ENCODE measurements at regions of chr2 and their contacts with region 1.

Region 1: DNA sequence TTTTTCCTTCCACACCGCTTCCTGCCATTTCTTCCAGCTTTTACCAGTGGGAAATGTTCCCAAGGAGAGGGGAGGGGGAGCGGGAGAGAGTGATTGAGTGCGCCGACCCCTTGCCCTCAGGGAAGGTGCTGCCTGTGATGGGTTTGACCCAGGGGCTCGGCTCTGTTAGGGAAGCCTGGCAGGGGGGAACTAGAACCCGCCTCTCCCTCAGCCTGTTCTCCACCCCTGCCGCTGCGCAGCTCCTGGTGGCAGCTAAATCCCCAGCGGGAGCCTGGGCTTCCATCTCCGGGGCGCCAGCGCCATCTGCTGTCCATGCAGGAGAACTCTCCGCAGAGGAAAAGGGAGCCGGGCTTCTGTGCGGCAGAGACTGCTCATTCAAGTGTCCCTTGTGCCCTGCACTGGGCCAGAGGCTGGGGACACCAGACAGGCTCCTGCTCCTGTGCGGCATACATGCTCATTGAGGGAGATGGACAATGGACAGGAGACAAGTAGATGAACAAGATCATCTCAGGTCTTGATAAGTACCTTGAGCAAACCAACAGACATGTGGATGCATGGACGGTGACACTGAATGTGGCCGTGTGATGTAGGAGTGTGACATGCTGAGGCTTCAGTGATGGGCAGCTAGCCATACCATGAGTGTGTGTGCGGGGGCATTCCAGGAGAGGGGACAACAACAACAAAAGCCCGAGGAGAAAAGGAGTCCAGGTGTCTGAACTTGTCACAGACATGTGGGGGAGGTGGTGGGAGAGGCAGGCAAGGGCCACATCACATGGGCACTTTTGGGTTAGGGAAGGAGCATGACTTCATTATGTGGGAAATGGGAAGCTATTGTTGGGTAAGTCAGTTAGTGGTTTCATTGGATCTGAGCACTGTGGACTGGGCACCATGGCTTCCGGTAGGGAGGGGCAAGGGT is 13.3 kb downstream of the CHPF start:
- DNase-seq: peak; percentile 75
- H3K4me3 Mint-ChIP-seq: no peak overlapping the region
- H3K27ac Mint-ChIP-seq: no peak overlapping the region
- H3K4me1 Mint-ChIP-seq: no peaks in the 10 kb centered on the region
- H3K27me3 Mint-ChIP-seq: peaks cover 44% of the 10 kb centered on the region

Region 2: GRCh38 chr2:219402665-219403515 is 127.4 kb before region 1 on chr2:
- intact Hi-C with region 1: loop called (anchors 1 kb)
- DNase-seq: peak; percentile 34
- H3K4me3 Mint-ChIP-seq: no peak overlapping the region
- H3K27ac Mint-ChIP-seq: no peak overlapping the region
- H3K4me1 Mint-ChIP-seq: no peaks in the 10 kb centered on the region
- H3K27me3 Mint-ChIP-seq: peaks cover 10% of the 10 kb centered on the region

Region 3: DNA sequence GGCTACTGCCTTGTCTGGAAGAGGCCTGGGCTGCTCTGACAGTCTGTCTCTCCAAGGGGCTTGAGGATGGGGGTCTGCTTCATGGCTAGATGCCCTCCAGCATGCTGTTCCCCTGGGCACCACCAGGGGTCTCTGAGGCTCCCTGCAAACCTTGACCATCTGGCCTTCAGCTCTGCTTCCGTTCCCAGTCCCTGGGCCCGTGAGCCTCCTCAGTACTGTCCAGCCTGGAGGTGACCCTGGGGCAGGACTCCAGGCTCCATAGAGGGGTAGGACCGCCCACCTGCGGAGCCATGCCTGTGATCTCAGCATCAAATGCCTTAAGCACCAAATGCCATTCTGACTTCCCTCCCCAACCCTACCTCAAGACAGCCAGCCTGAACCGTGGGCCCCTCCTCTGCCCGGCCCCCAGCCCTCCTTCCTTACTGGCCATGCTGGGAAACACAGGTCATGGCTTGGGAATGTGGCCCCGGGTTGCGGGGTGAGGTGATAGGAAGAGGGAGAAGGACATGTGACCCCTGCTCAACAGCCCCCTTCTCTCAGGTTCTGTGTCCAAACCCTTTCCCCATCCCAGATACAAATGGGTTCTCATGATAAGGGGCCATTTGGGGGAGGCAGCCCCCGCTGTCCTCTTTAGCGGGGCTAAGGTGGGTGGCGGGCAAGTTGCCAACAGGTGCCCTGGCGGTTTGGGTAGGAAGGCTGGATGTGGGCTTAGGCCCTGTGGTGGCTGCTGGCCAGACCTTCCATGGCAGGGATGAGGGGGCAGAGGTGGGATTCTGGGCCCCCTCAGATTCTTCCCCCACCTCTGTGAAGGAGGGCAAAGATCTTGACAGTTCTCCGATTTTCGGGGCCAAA is 70.6 kb before region 1 on chr2:
- intact Hi-C with region 1: loop called (anchors 1 kb)
- DNase-seq: no peak
- H3K4me3 Mint-ChIP-seq: no peak overlapping the region
- H3K27ac Mint-ChIP-seq: no peak overlapping the region
- H3K4me1 Mint-ChIP-seq: peaks cover 7% of the 10 kb centered on the region
- H3K27me3 Mint-ChIP-seq: no peaks in the 10 kb centered on the region

Region 4: GRCh38 chr2:219475697-219476651 is 54.3 kb before region 1 on chr2:
- intact Hi-C with region 1: loop called (anchors 1 kb)
- DNase-seq: peak; percentile 39
- H3K4me3 Mint-ChIP-seq: no peak overlapping the region
- H3K27ac Mint-ChIP-seq: no peak overlapping the region
- H3K4me1 Mint-ChIP-seq: peaks cover 4% of the 10 kb centered on the region
- H3K27me3 Mint-ChIP-seq: peaks cover 4% of the 10 kb centered on the region

Region 5: DNA sequence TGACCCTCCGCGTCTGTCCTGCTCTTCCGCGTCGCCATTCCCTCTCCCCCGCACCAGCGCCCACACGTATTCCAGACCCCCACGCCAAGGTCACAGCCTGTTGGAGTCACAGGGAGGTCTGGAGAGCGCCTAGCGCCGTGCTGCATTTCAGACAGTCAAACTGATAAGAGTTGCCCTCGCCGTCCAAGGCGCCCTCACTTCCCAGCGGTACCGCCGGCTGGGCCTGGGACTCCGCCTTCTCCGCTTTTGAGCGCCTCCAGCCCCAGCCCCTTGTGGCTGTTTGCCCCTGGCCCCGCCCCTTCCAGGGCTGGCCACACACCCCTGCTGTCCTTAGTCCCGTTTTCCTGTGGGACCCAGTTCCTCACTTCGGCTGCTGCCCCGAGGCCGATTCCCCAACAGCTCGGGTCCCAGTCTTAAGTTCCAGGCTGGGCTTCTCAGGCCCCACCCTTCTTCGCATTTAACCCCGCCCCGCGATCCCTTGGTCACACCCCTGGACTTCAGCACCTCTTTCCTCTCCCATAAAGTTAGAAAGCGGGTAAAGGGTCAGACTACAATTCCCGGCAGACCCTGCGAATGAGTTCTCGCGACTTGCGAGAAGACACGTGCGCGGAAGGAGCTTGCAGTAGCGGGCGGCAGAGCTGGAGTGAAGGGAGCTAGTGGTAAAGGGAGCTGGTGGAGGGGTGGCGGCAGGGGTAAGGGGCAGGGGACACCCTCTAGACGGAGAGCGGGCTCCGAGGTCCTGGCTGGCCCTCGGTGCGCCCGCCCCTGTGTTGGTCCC is 31.8 kb before region 1 on chr2 and contains the start of gene GMPPA:
- intact Hi-C with region 1: loop called (anchors 1 kb)
- DNase-seq: peak; percentile 95
- H3K4me3 Mint-ChIP-seq: peak within 1 kb of the TSS; percentile 96
- H3K27ac Mint-ChIP-seq: peak within 1 kb of the TSS; percentile 91
- H3K4me1 Mint-ChIP-seq: peaks cover 33% of the 10 kb centered on the region
- H3K27me3 Mint-ChIP-seq: peaks cover 43% of the 10 kb centered on the region
- total RNA-seq, gene GMPPA: 52.0 and 52.9 TPM in 2 replicates

Region 6: GRCh38 chr2:219509780-219510511 is 20.4 kb before region 1 on chr2:
- intact Hi-C with region 1: loop called (anchors 1 kb)
- DNase-seq: peak; percentile 25
- H3K4me3 Mint-ChIP-seq: no peak overlapping the region
- H3K27ac Mint-ChIP-seq: no peak overlapping the region
- H3K4me1 Mint-ChIP-seq: peaks cover 6% of the 10 kb centered on the region
- H3K27me3 Mint-ChIP-seq: peaks cover 44% of the 10 kb centered on the region

Region 7: GRCh38 chr2:219836647-219837177 is 306.4 kb after region 1 on chr2:
- intact Hi-C with region 1: no loop called
- DNase-seq: no peak
- H3K4me3 Mint-ChIP-seq: no peak overlapping the region
- H3K27ac Mint-ChIP-seq: no peak overlapping the region
- H3K4me1 Mint-ChIP-seq: no peaks in the 10 kb centered on the region
- H3K27me3 Mint-ChIP-seq: no peaks in the 10 kb centered on the region

Measured in activated T-helper 2 cell treated with anti-CD3 and anti-CD28 coated beads, Interferon-gamma antibody, Interleukin-2, Interleukin-4, amounts not matched to agents 10 μg/mL and 5 μg/mL and 100 μg/mL, durations not matched to agents 14 hours and 24 hours and 36 hours (primary cell).